ENCODE measurements at regions of chr2 and their contacts with region 1.

Region 1: GRCh38 chr2:231452799-231453508 is 11.3 kb downstream of the NCL start:
- DNase-seq: peak in 1 of 2 experiments; percentile 23
- ATAC-seq: peak; percentile 13 to 38
- H3K4me3 ChIP-seq: no peak overlapping the region
- H3K27ac ChIP-seq: no peak overlapping the region
- H3K4me1 ChIP-seq: no peaks in the 10 kb centered on the region
- CTCF ChIP-seq: no peak
- EP300 ChIP-seq: no peak
- POLR2A ChIP-seq: no peak
- RAD21 ChIP-seq: no peak

Region 2: DNA sequence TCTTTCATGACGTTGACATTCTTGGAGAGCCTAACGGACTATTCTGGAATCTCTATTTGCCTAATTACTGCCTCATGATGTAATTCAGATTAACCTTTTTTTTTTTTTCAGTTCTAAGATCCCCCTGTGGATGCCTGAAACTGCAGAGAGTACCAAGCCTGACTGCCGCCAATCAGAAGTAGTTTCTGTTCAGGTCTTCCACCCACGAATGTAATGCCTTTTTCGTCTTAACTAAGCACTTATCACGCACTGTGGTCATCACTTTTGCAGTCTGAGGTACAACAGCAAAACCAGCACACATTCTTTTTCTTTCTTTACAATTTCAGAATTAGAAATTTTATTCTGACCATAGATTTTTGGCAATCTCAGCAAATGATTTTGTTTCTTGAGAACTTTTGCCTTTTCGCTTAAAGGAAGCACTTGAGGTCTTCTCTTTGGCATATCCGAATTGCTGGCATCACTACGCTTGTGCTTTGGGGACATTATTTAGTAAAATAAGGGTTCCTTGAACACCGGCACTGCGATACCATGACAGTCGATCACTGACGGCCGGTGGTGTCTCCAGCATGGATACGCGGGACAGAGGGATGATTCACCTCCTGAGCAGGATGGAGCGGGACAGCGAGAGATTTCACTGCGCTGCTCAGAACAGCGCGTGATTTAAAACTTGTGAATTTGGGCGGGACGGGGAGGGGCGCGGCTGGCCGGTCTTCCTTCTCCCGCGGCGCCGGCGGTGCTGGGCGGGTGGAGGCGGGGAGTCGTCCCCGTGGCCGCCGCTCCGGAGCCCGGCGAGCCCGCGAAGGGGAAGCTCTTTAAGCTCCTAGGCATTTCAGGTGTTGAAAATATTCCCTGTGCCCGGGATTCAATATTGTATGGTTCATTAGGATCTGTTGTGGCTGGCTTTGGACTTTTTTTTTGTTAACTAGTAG is 495.9 kb before region 1 on chr2:
- CTCF ChIA-PET with region 1: no interaction called
- POLR2A ChIA-PET with region 1: no interaction called
- DNase-seq: peak; percentile 60 to 73
- ATAC-seq: peak; percentile 92 to 96
- H3K4me3 ChIP-seq: peak overlapping the region; percentile 43
- H3K27ac ChIP-seq: peak overlapping the region; percentile 13 to 58; a peak in 3 of 6 replicates
- H3K4me1 ChIP-seq: 0 out of 3 replicates have a peak, but pooled peaks cover 4% of the 10 kb centered on the region
- CTCF ChIP-seq: no peak
- EP300 ChIP-seq: no peak
- POLR2A ChIP-seq: no peak
- RAD21 ChIP-seq: no peak

Region 3: GRCh38 chr2:231068525-231069222 is 384.3 kb before region 1 on chr2:
- CTCF ChIA-PET with region 1: no interaction called
- POLR2A ChIA-PET with region 1: interaction called, 11 read pairs
- DNase-seq: peak; percentile 61 to 67
- ATAC-seq: peak; percentile 97 to 99
- H3K4me3 ChIP-seq: no peak overlapping the region
- H3K27ac ChIP-seq: peak overlapping the region; percentile 19 to 74; a peak in 4 of 6 replicates
- H3K4me1 ChIP-seq: peaks cover 23% of the 10 kb centered on the region
- CTCF ChIP-seq: no peak
- EP300 ChIP-seq: no peak
- POLR2A ChIP-seq: no peak
- RAD21 ChIP-seq: no peak

Region 4: GRCh38 chr2:231104115-231104713 is 348.7 kb before region 1 on chr2:
- CTCF ChIA-PET with region 1: interaction called, 12 read pairs
- POLR2A ChIA-PET with region 1: no interaction called
- DNase-seq: peak; percentile 21 to 55
- ATAC-seq: peak; percentile 84 to 89; a peak in 5 of 6 replicates
- H3K4me3 ChIP-seq: no peak overlapping the region
- H3K27ac ChIP-seq: no peak overlapping the region
- H3K4me1 ChIP-seq: peaks cover 42% of the 10 kb centered on the region
- CTCF ChIP-seq: peak; percentile 90
- EP300 ChIP-seq: no peak
- POLR2A ChIP-seq: no peak
- RAD21 ChIP-seq: peak; percentile 76 to 77

Region 5: GRCh38 chr2:231655897-231656296 is 202.9 kb after region 1 on chr2:
- CTCF ChIA-PET with region 1: no interaction called
- POLR2A ChIA-PET with region 1: no interaction called
- DNase-seq: no peak
- ATAC-seq: no peak
- H3K4me3 ChIP-seq: no peak overlapping the region
- H3K27ac ChIP-seq: no peak overlapping the region
- H3K4me1 ChIP-seq: 0 out of 3 replicates have a peak, but pooled peaks cover 3% of the 10 kb centered on the region
- CTCF ChIP-seq: no peak
- EP300 ChIP-seq: no peak
- POLR2A ChIP-seq: no peak
- RAD21 ChIP-seq: no peak

Measured in A549 (cell line).